ENCODE measurements at regions of chr2 and their contacts with region 1.

Region 1: DNA sequence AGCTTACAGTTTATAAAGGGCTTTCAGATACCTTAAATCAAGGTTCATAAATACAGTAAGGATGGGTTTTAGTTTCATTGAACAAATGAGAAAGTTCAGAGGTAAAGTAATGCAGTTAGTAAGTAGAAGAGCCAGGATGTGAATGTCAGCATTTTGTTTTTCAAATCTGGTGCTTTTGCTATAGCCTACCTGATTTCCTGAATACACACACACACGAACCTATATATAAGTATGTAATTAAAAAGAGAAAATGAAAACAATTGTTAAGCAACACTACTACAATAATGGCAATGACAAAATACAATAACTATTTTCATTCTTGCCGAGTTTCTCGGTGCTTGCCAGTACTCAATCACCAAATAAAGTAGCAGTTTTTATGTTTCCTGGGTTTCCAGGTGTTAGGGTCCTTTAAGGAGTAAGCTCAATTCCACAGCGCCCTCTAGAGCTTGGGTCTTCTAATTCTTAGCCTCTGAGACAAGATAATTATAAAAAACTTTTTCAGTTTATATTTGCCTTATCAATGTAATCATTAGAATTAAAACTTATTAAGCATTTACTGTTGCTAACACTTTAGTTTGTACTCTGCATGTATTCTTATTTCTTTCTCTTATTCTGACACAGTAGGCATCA is 512.9 kb upstream of the ACVR2A start:
- DNase-seq: peak in 6 of 9 experiments; percentile 11 to 52 (median 16)
- ATAC-seq: no peak
- H3K4me3 ChIP-seq: no peak overlapping the region
- H3K4me3 Mint-ChIP-seq: no peak overlapping the region
- H3K27ac ChIP-seq: no peak overlapping the region
- H3K27ac Mint-ChIP-seq: no peak overlapping the region
- H3K4me1 ChIP-seq: no peaks in the 10 kb centered on the region
- H3K4me1 Mint-ChIP-seq: no peaks in the 10 kb centered on the region
- H3K27me3 ChIP-seq: no peaks in the 10 kb centered on the region
- H3K27me3 Mint-ChIP-seq: no peaks in the 10 kb centered on the region
- CTCF ChIP-seq: no peak

Region 2: GRCh38 chr2:147082850-147083522 is 248.9 kb before region 1 on chr2:
- CTCF ChIA-PET with region 1: no interaction called
- POLR2A ChIA-PET with region 1: no interaction called
- intact Hi-C with region 1: loop called in 1 of 2 experiments (anchors 5 kb)
- DNase-seq: peak in 6 of 9 experiments; percentile 22 to 57 (median 38)
- ATAC-seq: no peak
- H3K4me3 ChIP-seq: no peak overlapping the region
- H3K4me3 Mint-ChIP-seq: no peak overlapping the region
- H3K27ac ChIP-seq: no peak overlapping the region
- H3K27ac Mint-ChIP-seq: no peak overlapping the region
- H3K4me1 ChIP-seq: no peaks in the 10 kb centered on the region
- H3K4me1 Mint-ChIP-seq: no peaks in the 10 kb centered on the region
- H3K27me3 ChIP-seq: no peaks in the 10 kb centered on the region
- H3K27me3 Mint-ChIP-seq: no peaks in the 10 kb centered on the region
- CTCF ChIP-seq: peak; percentile 45

Measured in CD8-positive, alpha-beta T cell (primary cell).